Tibial artery (tissue), 4 donors: ENCODE measurements at regions of chr12 and their contacts with region 1.

Region 1: DNA sequence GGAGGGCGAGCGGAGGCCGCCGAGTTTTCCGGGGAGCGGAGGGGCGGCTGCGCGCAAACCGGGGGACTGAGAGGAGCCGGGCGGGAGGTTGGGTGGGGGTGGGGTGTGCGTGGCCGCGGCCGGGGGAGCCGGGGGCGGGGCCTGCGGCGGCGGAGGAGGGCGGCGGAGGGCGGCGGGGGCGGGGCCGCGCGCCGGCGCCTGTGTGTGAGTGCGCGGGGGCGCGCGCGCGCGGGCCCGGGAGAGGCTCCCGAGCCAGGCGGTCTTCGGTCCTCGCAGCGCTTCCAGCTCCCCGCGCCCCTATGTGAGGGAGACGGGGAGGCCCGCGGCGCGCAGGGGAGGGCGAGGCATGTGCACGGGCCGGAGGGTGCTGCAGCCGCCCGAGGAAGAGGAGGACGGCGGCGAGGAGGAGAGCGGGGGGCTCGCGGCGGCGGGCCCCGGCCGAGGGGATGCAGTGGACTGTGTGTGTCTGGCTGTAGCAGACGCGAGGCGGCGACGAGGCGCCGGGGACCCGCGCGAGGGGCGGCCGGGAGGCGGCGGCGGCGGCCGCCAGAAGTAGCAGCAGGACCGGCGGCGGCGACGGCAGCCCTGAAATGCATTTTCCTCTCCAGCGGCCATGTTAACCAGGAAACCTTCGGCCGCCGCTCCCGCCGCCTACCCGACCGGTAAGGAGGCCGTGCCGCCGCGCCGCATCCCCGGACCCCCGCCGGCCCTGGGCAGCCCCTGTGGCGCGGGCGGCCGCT is at the start of gene DYRK2:
- DNase-seq: peak; percentile 80 to 87
- H3K4me3 ChIP-seq: peak within 1 kb of the TSS; percentile 93 to 100
- H3K27ac ChIP-seq: peak within 1 kb of the TSS; percentile 96 to 97
- H3K4me1 ChIP-seq: peaks cover 0 to 34% (median 24%) of the 10 kb centered on the region in 4 donors
- H3K27me3 ChIP-seq: no peaks in the 10 kb centered on the region
- CTCF ChIP-seq: peak in 1 of 2 experiments; percentile 11

Region 2: GRCh38 chr12:67441736-67442346 is 206.8 kb before region 1 on chr12:
- intact Hi-C with region 1: loop called (anchors 10 kb)
- DNase-seq: peak; percentile 90 to 91
- H3K4me3 ChIP-seq: peak overlapping the region in 1 of 2 donors; percentile 2
- H3K27ac ChIP-seq: peak overlapping the region; percentile 26 to 35
- H3K4me1 ChIP-seq: peaks cover 0 to 14% (median 3%) of the 10 kb centered on the region in 4 donors
- H3K27me3 ChIP-seq: no peaks in the 10 kb centered on the region
- CTCF ChIP-seq: peak; percentile 70 to 84

Region 3: GRCh38 chr12:67676624-67677023 is 27.9 kb after region 1 on chr12:
- intact Hi-C with region 1: loop called (anchors 2 kb)
- DNase-seq: no peak
- H3K4me3 ChIP-seq: no peak overlapping the region
- H3K27ac ChIP-seq: no peak overlapping the region
- H3K4me1 ChIP-seq: peaks cover 0 to 27% (median 16%) of the 10 kb centered on the region in 4 donors
- H3K27me3 ChIP-seq: no peaks in the 10 kb centered on the region
- CTCF ChIP-seq: no peak

Region 4: DNA sequence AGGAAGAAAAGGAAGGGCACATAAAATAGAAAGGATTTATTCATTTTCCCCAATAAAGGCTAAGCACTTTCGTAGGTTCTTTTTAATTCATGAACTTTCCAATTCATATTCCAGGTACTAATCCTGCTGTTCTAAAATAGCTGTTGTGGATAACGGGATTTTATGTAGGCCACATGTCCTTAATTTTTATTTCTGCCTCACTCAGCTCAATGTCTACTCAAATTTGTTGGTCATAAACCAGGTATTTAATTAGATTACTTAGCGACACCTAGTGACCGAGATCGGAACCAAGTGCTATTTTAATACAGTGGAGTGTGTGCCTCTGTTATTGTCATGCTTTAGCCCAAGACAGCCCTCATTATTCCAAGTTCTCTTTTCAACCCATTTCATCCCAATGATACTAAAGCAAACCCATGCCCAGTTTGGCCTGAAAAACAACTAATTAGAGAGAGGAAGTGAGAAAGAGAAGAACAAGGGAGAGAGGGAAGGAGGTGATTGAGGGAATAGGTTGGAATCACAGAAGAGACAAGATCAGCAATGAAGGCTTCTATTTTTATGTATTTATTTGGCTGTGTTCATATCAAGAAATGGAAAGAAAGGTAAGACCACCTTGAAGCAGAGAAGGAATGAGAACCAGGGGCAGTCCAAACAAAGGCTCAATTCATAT is 294.7 kb after region 1 on chr12:
- intact Hi-C with region 1: loop called (anchors 5 kb)
- DNase-seq: peak in 1 of 2 donors; percentile 89
- H3K4me3 ChIP-seq: no peak overlapping the region
- H3K27ac ChIP-seq: peak overlapping the region in 1 of 2 donors; percentile 4
- H3K4me1 ChIP-seq: peaks cover 0 to 15% (median 2%) of the 10 kb centered on the region in 4 donors
- H3K27me3 ChIP-seq: no peaks in the 10 kb centered on the region
- CTCF ChIP-seq: peak; percentile 75 to 85